Activated T-helper 1 cell treated with anti-CD3 and anti-CD28 coated beads, Interleukin-12 subunit alpha, Interleukin-12 subunit beta, Interleukin-2, Interleukin-4 antibody, amounts not matched to agents 30 ng/mL and 10 ng/mL and 1 ng/mL, durations not matched to agents 14 hours and 24 hours and 36 hours (primary cell): ENCODE measurements at regions of chr19 and their contacts with region 1.

Region 1: DNA sequence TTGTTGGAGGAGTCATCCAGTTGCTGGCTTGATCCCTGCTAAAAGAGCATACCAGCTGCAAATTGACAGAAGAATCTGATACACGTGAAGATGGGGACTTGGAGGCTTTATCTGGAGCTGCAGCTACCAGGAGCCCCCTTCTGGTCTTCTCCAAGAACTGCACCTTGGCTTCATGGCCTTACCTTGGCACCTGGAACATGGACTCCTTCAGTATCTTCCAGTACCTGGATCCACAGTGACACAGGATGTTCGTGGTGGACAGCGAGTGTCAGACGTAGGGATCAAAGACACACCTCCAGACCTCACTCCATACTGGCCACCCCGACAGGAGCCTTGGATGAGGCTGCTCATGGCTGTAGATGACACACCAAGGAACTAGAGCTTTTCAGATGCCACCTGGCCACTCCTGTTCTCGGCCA is 9.9 kb upstream of the ACSBG2 start:
- DNase-seq: peak; percentile 48
- H3K4me3 Mint-ChIP-seq: no peak overlapping the region
- H3K27ac Mint-ChIP-seq: no peak overlapping the region
- H3K4me1 Mint-ChIP-seq: no peaks in the 10 kb centered on the region
- H3K27me3 Mint-ChIP-seq: no peaks in the 10 kb centered on the region

Region 2: GRCh38 chr19:5987077-5987818 is 138.3 kb before region 1 on chr19:
- intact Hi-C with region 1: loop called (anchors 1 kb)
- DNase-seq: peak; percentile 57
- H3K4me3 Mint-ChIP-seq: peak overlapping the region; percentile 75
- H3K27ac Mint-ChIP-seq: peak overlapping the region; percentile 55
- H3K4me1 Mint-ChIP-seq: peaks cover 44% of the 10 kb centered on the region
- H3K27me3 Mint-ChIP-seq: no peaks in the 10 kb centered on the region

Region 3: DNA sequence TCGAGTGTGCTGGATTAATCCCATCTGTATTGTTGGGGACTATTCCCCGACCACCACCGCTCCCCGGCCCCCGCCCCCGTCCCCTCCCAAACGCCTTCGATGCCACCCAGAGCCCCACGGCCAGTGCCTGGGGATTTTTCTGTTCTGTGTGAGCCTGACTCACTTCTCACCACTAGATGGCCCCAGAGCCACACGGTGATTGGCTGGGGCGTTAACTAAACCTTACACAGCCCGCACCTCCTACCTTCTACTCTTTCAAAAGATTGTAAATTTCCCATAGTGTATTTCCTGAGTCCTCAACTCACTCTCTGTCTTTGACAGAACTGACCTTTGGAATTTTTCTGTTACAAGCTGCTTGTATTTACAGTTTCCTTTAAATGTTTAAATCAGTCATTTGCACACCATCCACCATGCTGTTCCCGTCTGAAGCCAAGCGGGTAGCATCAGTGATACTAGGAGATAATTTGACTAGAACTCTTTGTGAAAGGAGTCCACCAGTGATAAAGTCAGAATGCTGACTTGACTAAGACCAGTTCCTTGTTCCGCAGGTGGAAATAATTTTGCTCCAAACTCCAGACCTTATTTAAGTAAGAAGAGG is 76.7 kb before region 1 on chr19:
- intact Hi-C with region 1: loop called (anchors 1 kb)
- DNase-seq: peak; percentile 64
- H3K4me3 Mint-ChIP-seq: no peak overlapping the region
- H3K27ac Mint-ChIP-seq: peak overlapping the region; percentile 21
- H3K4me1 Mint-ChIP-seq: peaks cover 7% of the 10 kb centered on the region
- H3K27me3 Mint-ChIP-seq: peaks cover 7% of the 10 kb centered on the region

Region 4: GRCh38 chr19:6066661-6067646 is 58.6 kb before region 1 on chr19:
- intact Hi-C with region 1: loop called (anchors 5 kb)
- DNase-seq: no peak
- H3K4me3 Mint-ChIP-seq: no peak overlapping the region
- H3K27ac Mint-ChIP-seq: peak overlapping the region; percentile 1
- H3K4me1 Mint-ChIP-seq: peaks cover 40% of the 10 kb centered on the region
- H3K27me3 Mint-ChIP-seq: no peaks in the 10 kb centered on the region

Region 5: DNA sequence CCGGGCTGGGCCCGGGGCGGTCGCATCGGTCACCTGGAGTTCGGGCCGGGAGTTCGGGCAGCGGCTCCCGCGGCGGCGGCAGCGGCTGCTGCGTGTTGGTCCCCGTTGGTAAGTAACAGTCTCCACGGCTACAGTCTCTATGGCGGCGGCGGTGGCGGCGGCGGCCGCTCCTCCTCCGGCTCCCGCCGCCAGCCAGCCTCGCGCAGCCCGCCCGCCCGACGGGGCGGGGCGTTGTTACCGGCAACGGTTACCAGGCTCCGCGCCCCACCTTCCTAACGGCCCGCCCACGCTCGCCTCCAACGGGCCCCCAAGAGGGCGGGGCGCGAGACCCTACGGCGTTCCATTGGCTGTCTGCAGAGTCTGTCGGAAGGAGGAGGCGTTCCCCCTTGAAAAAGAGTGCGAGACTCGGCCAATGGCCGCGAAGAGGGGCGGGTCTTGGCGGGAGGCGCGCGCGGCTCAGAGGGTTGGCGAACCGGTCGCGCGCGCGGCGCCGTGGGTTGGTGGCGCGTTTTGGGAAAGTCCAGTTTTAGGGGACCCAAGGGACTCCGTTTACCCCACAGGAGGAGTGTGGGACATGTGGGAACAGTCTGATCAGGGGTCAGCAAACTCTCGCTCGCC is 15.1 kb before region 1 on chr19 and contains the start of gene RFX2:
- intact Hi-C with region 1: loop called (anchors 2 kb)
- DNase-seq: peak; percentile 99
- H3K4me3 Mint-ChIP-seq: peak within 1 kb of the TSS; percentile 86
- H3K27ac Mint-ChIP-seq: peak within 1 kb of the TSS; percentile 79
- H3K4me1 Mint-ChIP-seq: peaks cover 27% of the 10 kb centered on the region
- H3K27me3 Mint-ChIP-seq: peaks cover 17% of the 10 kb centered on the region
- total RNA-seq, gene RFX2: 9.2 and 10.2 TPM in 2 replicates

Region 6: GRCh38 chr19:6297202-6297601 is 171.6 kb after region 1 on chr19:
- intact Hi-C with region 1: loop called (anchors 1 kb)
- DNase-seq: no peak
- H3K4me3 Mint-ChIP-seq: no peak overlapping the region
- H3K27ac Mint-ChIP-seq: no peak overlapping the region
- H3K4me1 Mint-ChIP-seq: peaks cover 4% of the 10 kb centered on the region
- H3K27me3 Mint-ChIP-seq: no peaks in the 10 kb centered on the region